H1 (cell line): ENCODE measurements at regions of chr12 and their contacts with region 1.

Region 1: DNA sequence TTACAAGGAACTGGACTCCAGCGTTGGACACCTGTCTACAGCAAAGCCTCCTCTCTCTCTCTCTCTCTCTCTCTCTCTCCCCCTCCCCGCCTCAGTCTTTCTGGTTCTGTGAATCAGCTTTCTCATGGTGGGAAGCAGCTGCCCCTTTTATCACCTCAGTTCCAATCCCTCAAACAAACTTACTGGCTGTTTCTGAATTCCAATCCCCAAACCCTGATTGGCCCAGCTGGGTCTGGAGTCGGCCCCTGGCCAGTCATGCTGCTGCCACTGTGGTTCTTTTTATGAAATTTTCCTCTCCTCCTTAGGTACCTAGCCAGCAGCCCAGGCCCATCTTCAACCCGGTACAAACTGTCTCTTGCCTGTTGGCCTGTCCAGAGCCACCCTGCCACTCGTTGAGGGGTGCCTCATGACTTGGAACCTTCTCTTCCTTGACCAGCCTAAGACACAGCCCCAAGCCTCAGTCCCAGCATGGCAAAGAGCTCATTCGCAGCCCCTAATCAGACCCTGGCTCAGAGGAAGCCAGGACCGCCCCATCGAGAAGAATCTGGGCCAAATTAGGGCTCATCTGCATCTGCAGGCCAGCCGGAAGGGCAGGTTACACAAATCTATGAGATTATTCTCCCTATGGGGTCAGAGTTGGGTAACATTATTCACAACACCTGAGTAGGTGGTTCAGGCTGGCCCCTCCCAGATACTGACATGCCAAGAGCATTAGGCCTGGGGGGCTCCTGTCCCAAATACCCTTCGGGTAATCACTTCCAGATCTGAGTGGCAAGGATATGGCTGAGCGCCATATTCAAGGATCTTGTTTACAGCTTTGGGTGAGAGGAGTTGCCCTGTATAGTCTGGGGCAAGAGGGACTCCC is 9.5 kb upstream of the MORN3 start:
- DNase-seq: no peak
- H3K4me3 ChIP-seq: no peak overlapping the region
- H3K27ac ChIP-seq: no peak overlapping the region
- H3K4me1 ChIP-seq: peaks cover 0 to 4% (median 0%) of the 10 kb centered on the region in 4 experiments; a peak in 4 of 7 replicates
- H3K27me3 ChIP-seq: no peaks in the 10 kb centered on the region
- CTCF ChIP-seq: no peak
- EP300 ChIP-seq: no peak
- POLR2A ChIP-seq: no peak
- RAD21 ChIP-seq: no peak

Region 2: DNA sequence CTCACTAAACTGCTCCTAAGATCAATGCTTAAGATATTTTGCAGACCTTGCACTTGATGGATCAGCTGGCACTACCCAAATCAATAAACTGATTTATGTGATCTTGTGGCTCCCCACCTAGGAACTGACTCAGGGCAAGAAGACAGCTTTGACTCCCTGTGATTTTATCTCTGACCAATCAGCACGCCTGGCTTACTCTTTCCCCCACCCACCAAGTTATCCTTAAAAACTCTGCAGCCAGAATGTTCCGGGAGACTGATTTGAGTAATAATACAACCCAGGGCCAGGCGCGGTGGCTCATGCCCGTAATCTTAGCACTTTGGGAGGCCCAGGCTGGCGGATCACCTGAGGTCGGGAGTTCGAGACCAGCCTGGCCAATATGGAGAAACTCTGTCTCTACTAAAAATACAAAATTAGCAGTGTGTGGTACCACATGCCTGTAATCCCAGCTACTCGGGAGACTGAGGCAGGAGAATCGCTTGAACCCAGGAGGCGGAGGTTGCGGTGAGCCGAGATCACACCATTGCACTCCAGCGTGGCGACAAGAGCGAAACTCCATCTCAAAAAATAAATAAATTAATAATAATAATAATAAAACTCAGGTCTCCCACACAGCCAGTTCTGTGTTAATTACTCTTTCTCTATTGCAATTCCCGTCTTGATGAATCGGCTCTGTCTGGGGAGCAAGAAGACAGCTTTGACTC is 21.5 kb before region 1 on chr12:
- CTCF ChIA-PET with region 1: interaction called, 4 read pairs
- POLR2A ChIA-PET with region 1: interaction called, 12 read pairs
- DNase-seq: no peak
- H3K4me3 ChIP-seq: no peak overlapping the region
- H3K27ac ChIP-seq: no peak overlapping the region
- H3K4me1 ChIP-seq: peaks cover 0 to 8% (median 4%) of the 10 kb centered on the region in 4 experiments; a peak in 5 of 7 replicates
- H3K27me3 ChIP-seq: no peaks in the 10 kb centered on the region
- CTCF ChIP-seq: no peak
- EP300 ChIP-seq: no peak
- POLR2A ChIP-seq: no peak
- RAD21 ChIP-seq: no peak

Region 3: DNA sequence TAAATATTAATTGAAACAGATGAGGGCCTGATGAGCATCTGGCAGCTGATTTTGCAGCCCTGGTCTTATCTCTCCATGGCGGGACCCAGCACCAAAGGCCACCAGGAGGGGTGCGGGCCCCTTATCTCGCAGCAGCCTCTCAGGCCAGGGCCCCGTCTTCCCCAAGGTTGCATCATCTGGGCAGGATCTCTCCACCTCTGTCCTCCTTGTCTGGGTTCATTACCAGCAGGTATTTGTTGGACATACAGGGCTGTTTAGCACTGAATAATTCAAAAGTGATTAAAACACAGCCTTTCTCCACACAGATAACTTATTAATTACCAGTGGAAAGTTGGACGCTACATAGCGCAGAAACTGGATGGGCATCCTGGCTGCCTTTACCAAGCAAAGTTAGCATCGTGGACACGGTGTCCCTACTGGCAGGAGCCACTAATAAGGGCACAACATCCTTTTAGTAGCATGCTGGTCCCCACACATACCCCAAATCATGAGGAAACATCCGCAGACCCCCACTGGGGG is 59.5 kb after region 1 on chr12:
- CTCF ChIA-PET with region 1: no interaction called
- POLR2A ChIA-PET with region 1: no interaction called
- DNase-seq: no peak
- H3K4me3 ChIP-seq: no peak overlapping the region
- H3K27ac ChIP-seq: no peak overlapping the region
- H3K4me1 ChIP-seq: no peaks in the 10 kb centered on the region
- H3K27me3 ChIP-seq: no peaks in the 10 kb centered on the region
- CTCF ChIP-seq: no peak
- EP300 ChIP-seq: no peak
- POLR2A ChIP-seq: no peak
- RAD21 ChIP-seq: no peak

Region 4: DNA sequence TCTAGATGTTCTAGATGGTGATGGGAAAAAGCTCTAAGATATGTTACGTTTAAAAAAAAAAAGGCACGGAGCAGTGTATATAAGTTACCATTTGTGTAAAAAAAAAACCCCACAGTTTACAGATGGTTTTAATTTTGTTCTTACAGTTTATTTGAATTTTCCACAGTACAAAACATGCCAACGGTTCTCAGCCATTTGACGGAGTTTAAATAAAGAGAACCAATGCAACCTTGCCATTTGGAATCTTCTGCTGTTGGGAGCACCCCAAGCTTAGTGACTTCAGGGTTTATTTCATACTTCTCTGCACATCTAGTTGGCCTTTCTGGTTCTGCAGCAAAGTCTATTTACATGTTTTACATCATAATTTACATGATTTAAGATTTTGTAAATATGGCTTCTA is 187.4 kb after region 1 on chr12:
- CTCF ChIA-PET with region 1: no interaction called
- POLR2A ChIA-PET with region 1: no interaction called
- DNase-seq: no peak
- H3K4me3 ChIP-seq: no peak overlapping the region
- H3K27ac ChIP-seq: no peak overlapping the region
- H3K4me1 ChIP-seq: no peaks in the 10 kb centered on the region; a peak in 1 of 7 replicates
- H3K27me3 ChIP-seq: no peaks in the 10 kb centered on the region
- CTCF ChIP-seq: no peak
- EP300 ChIP-seq: no peak
- POLR2A ChIP-seq: no peak
- RAD21 ChIP-seq: no peak